Lower lobe of right lung (tissue), 2 donors: ENCODE measurements at regions of chr1 and their contacts with region 1.

Region 1: DNA sequence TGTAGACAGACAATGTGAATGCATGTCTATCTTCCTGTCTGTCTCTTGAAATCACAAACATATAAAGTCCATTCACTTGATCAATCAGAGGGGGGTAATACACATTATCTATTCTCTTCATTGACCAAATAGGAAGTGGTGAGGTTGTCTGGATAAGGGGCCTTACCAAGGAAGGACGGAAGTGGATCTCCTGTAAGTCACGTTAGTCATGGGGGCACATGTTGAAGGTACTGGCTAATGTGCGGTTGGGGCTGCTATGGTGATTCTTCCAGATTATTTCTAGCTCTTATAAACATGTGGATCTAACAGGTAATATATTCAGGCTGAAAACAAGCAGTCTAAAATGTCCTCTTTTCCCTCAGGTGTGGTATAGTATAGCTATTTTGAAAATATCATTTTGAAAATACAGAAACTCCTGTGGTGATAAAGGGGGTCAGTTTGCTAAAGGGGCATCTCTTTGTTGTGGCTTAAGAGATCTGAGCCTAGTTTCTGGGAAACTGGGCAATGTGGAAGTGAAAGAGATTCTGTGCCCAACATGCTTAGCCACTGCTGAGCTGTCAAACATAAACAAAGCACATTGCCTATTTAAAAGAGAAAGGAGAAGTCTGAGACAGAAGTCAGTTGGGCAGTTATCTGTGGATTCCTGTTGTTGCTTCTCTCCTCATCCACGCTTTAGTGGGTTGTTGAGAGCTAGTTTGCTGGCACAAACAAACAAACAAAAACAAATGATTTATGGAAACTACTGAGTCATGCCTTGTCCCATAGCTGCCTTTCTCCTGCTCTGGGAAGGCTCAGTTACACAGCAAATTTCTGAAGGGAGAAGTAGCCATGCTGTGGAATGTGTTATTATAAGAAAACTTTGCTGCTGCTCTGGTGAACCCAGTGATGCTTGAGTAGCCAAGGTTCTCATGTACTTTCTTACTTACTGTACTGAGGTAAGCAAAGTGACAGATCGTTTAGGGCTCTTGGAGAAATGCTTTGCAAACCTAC is 166.9 kb downstream of the HLX start:
- DNase-seq: no peak
- ATAC-seq: peak; percentile 61 to 68
- H3K4me3 ChIP-seq: no peak overlapping the region
- H3K27ac ChIP-seq: no peak overlapping the region
- H3K4me1 ChIP-seq: peaks cover 19% of the 10 kb centered on the region
- H3K27me3 ChIP-seq: no peaks in the 10 kb centered on the region
- CTCF ChIP-seq: no peak

Region 2: GRCh38 chr1:220894025-220894923 is 151.9 kb before region 1 on chr1:
- intact Hi-C with region 1: loop called (anchors 10 kb)
- DNase-seq: no peak
- ATAC-seq: peak; percentile 37 to 55
- H3K4me3 ChIP-seq: peak overlapping the region; percentile 47
- H3K27ac ChIP-seq: no peak overlapping the region
- H3K4me1 ChIP-seq: peaks cover 12% of the 10 kb centered on the region
- H3K27me3 ChIP-seq: peaks cover 56% of the 10 kb centered on the region
- CTCF ChIP-seq: no peak

Region 3: GRCh38 chr1:220908757-220909156 is 137.4 kb before region 1 on chr1:
- intact Hi-C with region 1: no loop called
- DNase-seq: no peak
- ATAC-seq: no peak
- H3K4me3 ChIP-seq: no peak overlapping the region
- H3K27ac ChIP-seq: no peak overlapping the region
- H3K4me1 ChIP-seq: no peaks in the 10 kb centered on the region
- H3K27me3 ChIP-seq: peaks cover 6% of the 10 kb centered on the region
- CTCF ChIP-seq: peak; percentile 33

Region 4: DNA sequence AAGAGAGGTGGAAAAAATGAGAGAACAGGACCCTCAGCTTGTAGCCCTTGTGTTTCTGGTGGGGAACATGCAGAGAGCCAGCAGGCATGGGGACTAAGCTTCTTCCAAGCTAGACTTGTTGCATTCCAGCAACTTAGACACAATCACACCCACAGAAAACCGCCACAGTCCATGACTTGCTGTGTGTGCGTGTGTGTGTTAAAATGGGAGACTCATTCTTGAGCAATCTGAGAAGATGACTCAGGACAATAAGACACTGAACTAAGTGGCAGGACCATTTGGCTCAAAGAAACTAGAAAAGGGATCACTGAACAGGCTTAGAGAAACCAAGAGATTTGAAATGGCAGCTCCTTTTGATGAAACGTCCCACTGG is 88.9 kb before region 1 on chr1:
- intact Hi-C with region 1: no loop called
- DNase-seq: no peak
- ATAC-seq: peak; percentile 33 to 65
- H3K4me3 ChIP-seq: no peak overlapping the region
- H3K27ac ChIP-seq: no peak overlapping the region
- H3K4me1 ChIP-seq: no peaks in the 10 kb centered on the region
- H3K27me3 ChIP-seq: no peaks in the 10 kb centered on the region
- CTCF ChIP-seq: no peak